Natural killer cell (primary cell): ENCODE measurements at regions of chr20 and their contacts with region 1.

Region 1: GRCh38 chr20:47356526-47357295 is at the start of gene ZMYND8:
- DNase-seq: peak; percentile 95 to 99
- ATAC-seq: peak; percentile 87 to 89 (median 87)
- H3K4me3 ChIP-seq: peak within 1 kb of the TSS; percentile 42
- H3K4me3 Mint-ChIP-seq: peak within 1 kb of the TSS; percentile 90
- H3K27ac ChIP-seq: peak within 1 kb of the TSS; percentile 86
- H3K27ac Mint-ChIP-seq: no peak within 1 kb of the TSS
- H3K4me1 ChIP-seq: peaks cover 68% of the 10 kb centered on the region
- H3K4me1 Mint-ChIP-seq: peaks cover 13 to 63% of the 10 kb centered on the region in 2 donors
- H3K27me3 ChIP-seq: no peaks in the 10 kb centered on the region
- H3K27me3 Mint-ChIP-seq: no peaks in the 10 kb centered on the region
- CTCF ChIP-seq: no peak
- total RNA-seq, gene ZMYND8: 57.6 to 72.6 (median 69.8) TPM

Region 2: DNA sequence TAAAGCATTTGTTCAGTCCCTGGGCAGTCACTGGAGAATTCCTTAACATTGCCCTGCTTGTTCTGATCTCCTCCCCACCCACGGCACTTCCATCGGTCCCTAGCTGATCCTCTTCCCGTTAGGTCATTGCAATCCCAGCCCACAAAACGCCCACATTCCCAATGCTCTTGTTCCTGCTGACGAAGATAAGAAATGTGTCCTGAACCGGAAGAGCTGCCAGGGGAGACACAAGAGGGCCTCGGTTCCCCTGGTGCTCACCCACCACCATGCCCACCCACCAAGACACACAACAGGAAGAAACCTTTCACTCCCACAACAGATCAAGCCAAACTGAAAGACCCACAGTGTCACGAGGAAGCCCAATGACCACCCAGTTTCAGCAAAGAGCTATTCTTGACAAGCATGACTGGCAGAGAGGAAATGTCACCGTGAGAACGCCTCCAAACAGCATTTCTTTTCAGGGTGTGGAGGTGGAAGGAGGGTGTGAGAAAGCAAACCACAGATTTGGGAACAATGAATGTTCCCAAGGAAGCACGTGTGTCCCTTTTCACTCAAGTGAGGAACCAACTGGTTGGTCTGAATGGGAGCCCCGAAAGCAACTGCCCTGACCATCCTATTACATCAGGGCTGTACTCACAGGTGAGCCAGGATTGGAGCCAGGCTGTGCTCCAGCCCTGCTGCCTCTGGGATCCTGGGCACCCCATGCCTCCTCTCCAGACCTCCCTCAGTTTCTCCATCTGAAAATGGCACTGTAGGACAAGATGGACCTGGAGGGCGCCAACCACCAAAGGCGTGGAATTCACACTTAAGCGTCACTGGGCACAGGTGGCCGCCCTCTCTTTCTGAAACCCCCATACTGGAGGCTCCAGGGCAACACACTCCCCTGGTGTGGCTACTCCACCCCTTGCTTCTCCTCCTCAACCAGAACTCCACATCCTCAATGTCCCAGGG is 97.7 kb before region 1 on chr20:
- intact Hi-C with region 1: no loop called
- DNase-seq: no peak
- ATAC-seq: no peak
- H3K4me3 ChIP-seq: no peak overlapping the region
- H3K4me3 Mint-ChIP-seq: peak overlapping the region; percentile 42
- H3K27ac ChIP-seq: peak overlapping the region; percentile 37
- H3K27ac Mint-ChIP-seq: peak overlapping the region; percentile 85 to 86
- H3K4me1 ChIP-seq: peaks cover 39% of the 10 kb centered on the region
- H3K4me1 Mint-ChIP-seq: peaks cover 36 to 49% of the 10 kb centered on the region in 2 donors
- H3K27me3 ChIP-seq: no peaks in the 10 kb centered on the region
- H3K27me3 Mint-ChIP-seq: no peaks in the 10 kb centered on the region
- CTCF ChIP-seq: no peak

Region 3: GRCh38 chr20:47317127-47317895 is 39.4 kb before region 1 on chr20:
- intact Hi-C with region 1: loop called (anchors 5 kb)
- DNase-seq: peak; percentile 36 to 50
- ATAC-seq: peak; percentile 67 to 81 (median 72)
- H3K4me3 ChIP-seq: no peak overlapping the region
- H3K4me3 Mint-ChIP-seq: peak overlapping the region; percentile 72
- H3K27ac ChIP-seq: peak overlapping the region; percentile 50
- H3K27ac Mint-ChIP-seq: peak overlapping the region; percentile 83 to 87
- H3K4me1 ChIP-seq: peaks cover 42% of the 10 kb centered on the region
- H3K4me1 Mint-ChIP-seq: peaks cover 59 to 71% of the 10 kb centered on the region in 2 donors
- H3K27me3 ChIP-seq: no peaks in the 10 kb centered on the region
- H3K27me3 Mint-ChIP-seq: no peaks in the 10 kb centered on the region
- CTCF ChIP-seq: no peak

Region 4: DNA sequence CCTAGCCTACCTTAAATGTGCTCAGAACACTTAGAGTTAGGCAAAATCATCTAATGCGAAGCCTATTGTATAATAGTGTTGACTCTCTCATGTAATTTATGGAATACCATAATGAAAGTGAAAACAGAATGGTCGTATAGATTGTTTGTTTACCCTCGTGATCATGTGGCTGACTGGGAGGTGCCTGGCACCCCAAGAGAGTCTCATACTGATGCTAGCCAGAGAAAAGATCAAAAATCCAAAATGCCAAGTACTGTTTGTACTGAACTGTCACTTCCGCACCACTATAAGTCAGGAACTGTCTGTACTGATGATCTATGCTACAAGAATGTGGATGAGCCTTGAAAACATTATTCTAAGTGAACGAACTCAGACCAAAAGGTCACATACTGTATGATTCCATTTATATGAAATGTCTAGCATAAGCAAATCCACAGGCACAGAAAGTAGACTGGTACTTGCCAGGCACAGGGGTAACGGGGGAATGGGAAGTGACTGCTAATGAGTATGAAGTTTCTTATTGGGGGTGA is 22.6 kb before region 1 on chr20:
- intact Hi-C with region 1: loop called (anchors 2 kb)
- DNase-seq: no peak
- ATAC-seq: peak; percentile 69 to 93 (median 79)
- H3K4me3 ChIP-seq: no peak overlapping the region
- H3K4me3 Mint-ChIP-seq: peak overlapping the region; percentile 21
- H3K27ac ChIP-seq: no peak overlapping the region
- H3K27ac Mint-ChIP-seq: peak overlapping the region; percentile 57 to 95
- H3K4me1 ChIP-seq: peaks cover 18% of the 10 kb centered on the region
- H3K4me1 Mint-ChIP-seq: peaks cover 46 to 82% of the 10 kb centered on the region in 2 donors
- H3K27me3 ChIP-seq: no peaks in the 10 kb centered on the region
- H3K27me3 Mint-ChIP-seq: no peaks in the 10 kb centered on the region
- CTCF ChIP-seq: no peak

Region 5: DNA sequence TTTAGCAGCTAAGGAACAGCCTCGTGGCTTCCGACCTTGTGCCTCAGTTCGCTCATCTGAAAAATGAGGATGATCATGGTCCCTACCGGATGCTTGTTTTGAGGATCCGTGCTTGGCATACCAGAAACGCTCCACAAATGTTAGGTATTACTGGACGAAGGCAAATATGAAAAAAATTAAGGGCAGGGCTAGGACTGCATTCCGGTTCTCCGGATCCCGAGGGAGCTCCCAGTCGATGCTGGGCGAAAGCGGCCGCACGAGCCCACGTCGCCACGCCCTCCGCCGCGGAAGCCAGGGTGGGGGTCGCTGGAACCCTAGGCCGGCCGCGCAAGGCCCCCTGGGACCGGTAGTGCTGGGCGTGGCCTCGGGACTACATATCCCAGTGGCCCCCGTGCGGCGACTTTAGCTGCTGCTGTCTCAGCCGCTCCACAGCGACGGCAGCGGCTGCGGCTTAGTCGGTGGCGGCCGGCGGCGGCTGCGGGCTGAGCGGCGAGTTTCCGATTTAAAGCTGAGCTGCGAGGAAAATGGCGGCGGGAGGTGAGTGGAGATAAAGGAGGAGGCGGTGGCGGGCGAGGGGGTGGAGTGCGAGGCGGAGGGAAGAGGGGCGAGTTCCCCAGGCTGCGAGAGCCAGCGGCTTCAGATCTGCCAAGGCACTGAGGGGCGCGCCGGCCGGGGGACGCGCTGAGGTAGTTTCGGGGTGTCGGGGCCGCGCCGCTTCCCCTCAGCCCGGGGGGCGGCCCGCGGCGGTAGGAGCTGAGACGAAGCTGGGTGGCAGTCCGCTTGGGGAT is 145.0 kb after region 1 on chr20 and contains the start of gene NCOA3:
- intact Hi-C with region 1: loop called (anchors 10 kb)
- DNase-seq: peak; percentile 84 to 91
- ATAC-seq: peak; percentile 83 to 88 (median 86)
- H3K4me3 ChIP-seq: peak within 1 kb of the TSS; percentile 97
- H3K4me3 Mint-ChIP-seq: peak within 1 kb of the TSS; percentile 98
- H3K27ac ChIP-seq: peak within 1 kb of the TSS; percentile 81
- H3K27ac Mint-ChIP-seq: peak within 1 kb of the TSS; percentile 91 to 98
- H3K4me1 ChIP-seq: peaks cover 9% of the 10 kb centered on the region
- H3K4me1 Mint-ChIP-seq: peaks cover 29 to 35% of the 10 kb centered on the region in 2 donors
- H3K27me3 ChIP-seq: no peaks in the 10 kb centered on the region
- H3K27me3 Mint-ChIP-seq: no peaks in the 10 kb centered on the region
- CTCF ChIP-seq: peak; percentile 32
- total RNA-seq, gene NCOA3: 44.3 to 63.3 (median 57.8) TPM